ENCODE measurements at regions of chr14 and their contacts with region 1.

Region 1: DNA sequence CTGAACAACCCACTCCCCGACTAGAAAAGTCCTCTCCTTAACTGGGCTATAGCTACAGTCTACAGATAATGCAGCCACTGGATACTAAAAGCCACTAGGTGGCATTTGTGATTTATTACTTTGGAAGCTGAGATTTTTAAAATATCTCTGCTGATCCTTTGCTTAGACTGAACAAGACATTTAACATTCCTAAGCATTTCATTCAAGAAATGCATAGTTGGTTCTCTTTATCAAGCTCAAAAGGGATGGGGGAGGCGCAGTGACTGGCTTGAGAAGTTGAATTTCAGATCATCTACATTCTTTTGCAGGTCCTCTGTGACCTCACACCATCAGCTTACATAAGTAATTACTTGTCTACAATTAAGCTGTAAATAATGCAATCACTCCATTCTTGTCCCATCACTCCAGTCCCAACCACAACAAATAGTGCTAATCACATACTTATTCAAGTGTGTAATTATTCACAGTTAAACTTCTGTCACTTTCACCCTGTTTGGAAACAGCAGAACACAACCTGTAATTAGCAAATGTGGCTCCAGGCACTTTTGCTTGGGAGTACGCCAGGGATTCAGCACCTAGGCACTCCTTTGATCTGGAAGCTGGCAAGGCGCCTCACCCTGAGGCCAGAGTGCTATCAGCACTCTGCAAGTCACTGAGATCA is 203.6 kb downstream of the NOVA1 start:
- DNase-seq: peak in 1 of 10 donors; percentile 70
- H3K4me3 ChIP-seq: no peak overlapping the region
- H3K27ac ChIP-seq: peak overlapping the region in 3 of 59 donors; percentile 10 to 31 (median 27)
- H3K27me3 ChIP-seq: no peaks in the 10 kb centered on the region
- CTCF ChIP-seq: peak; percentile 41 to 83 (median 69)

Region 2: GRCh38 chr14:25833341-25834126 is 560.7 kb before region 1 on chr14:
- intact Hi-C with region 1: loop called in 1 of 2 experiments (anchors 10 kb)
- DNase-seq: peak; percentile 26 to 83 (median 58)
- H3K4me3 ChIP-seq: peak overlapping the region in 30 of 59 donors; percentile 1 to 54 (median 26)
- H3K27ac ChIP-seq: peak overlapping the region in 54 of 59 donors; percentile 11 to 85 (median 64)
- H3K27me3 ChIP-seq: no peaks in the 10 kb centered on the region
- CTCF ChIP-seq: peak in 55 of 56 donors; percentile 39 to 76 (median 62)

Region 3: DNA sequence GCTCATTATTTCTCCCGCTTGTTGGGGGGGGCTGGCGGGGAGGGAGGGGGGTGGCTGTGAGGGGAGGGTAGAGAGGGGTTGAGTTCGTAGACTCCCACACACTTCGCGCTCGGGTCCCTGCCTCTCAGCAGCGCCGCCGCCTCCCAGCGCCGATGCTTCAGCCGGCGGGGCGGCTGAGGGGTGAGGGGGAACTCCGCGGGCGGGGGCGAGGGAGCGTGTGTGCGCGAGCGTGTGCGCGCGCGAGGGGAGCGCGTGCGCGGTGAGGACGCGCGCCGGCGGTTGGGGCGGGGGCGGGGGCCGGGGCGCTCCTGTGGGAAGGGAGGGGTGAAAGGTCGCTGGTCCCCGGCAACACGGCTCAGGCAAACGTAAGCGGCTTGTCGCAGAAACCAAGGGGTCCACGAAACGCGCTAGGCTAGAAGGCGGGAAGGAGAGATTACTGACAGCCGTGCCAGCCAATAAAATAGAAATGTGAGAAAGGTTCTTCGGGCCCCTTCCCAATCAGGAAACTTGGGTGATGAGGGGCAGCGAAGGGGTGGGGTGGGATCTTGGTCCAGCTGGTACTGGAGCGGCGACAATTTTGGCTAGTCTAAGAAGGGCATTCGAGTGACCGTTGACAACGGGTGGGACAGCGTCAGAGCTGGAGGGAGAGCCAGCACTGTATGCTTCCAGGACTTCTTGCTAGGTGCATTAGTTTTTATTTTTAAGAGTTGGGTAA is 204.0 kb after region 1 on chr14:
- intact Hi-C with region 1: loop called in 1 of 2 experiments (anchors 10 kb)
- DNase-seq: peak; percentile 78 to 96 (median 94)
- H3K4me3 ChIP-seq: peak overlapping the region; percentile 56 to 93 (median 79)
- H3K27ac ChIP-seq: peak overlapping the region; percentile 89 to 99 (median 98)
- H3K27me3 ChIP-seq: no peaks in the 10 kb centered on the region
- CTCF ChIP-seq: peak in 14 of 56 donors; percentile 3 to 22 (median 14)

Region 4: GRCh38 chr14:26730929-26731618 is 336.8 kb after region 1 on chr14:
- intact Hi-C with region 1: loop called (anchors 5 kb)
- DNase-seq: peak in 3 of 10 donors; percentile 15 to 39 (median 28)
- H3K4me3 ChIP-seq: no peak overlapping the region
- H3K27ac ChIP-seq: no peak overlapping the region
- H3K27me3 ChIP-seq: no peaks in the 10 kb centered on the region
- CTCF ChIP-seq: peak in 55 of 56 donors; percentile 14 to 70 (median 45)

Region 5: GRCh38 chr14:26984311-26985177 is 590.3 kb after region 1 on chr14:
- intact Hi-C with region 1: loop called in 1 of 2 experiments (anchors 10 kb)
- DNase-seq: peak in 7 of 10 donors; percentile 39 to 82 (median 65)
- H3K4me3 ChIP-seq: peak overlapping the region in 57 of 59 donors; percentile 3 to 61 (median 40)
- H3K27ac ChIP-seq: no peak overlapping the region
- H3K27me3 ChIP-seq: no peaks in the 10 kb centered on the region
- CTCF ChIP-seq: peak; percentile 54 to 90 (median 80)